Gastrocnemius medialis (tissue), 4 donors: ENCODE measurements at regions of chr13 and their contacts with region 1.

Region 1: DNA sequence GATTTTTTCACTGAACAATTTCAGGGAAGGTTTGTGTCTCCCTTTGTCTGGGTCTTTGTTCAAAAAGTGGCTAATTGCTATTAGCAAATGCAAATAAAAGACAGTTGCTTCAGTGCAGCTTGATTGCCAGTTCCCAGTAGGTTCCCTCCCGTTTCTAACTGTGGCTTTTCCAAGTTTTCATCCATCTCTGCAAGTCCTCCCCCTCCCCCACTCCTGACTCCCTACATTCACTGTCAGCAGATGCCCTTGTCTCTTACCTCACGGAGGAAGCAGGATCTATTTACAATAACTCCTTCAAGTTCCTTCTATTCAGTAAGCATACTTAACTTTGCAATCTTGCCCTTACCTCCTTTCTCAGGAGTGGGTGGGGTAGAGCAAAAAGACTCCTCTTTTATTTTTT is 55.4 kb upstream of the SCEL start:
- DNase-seq: no peak
- ATAC-seq: no peak
- H3K4me3 ChIP-seq: no peak overlapping the region
- H3K27ac ChIP-seq: no peak overlapping the region
- H3K4me1 ChIP-seq: peaks cover 8 to 14% of the 10 kb centered on the region in 2 donors
- H3K27me3 ChIP-seq: no peaks in the 10 kb centered on the region
- CTCF ChIP-seq: no peak
- POLR2A ChIP-seq: no peak

Region 2: DNA sequence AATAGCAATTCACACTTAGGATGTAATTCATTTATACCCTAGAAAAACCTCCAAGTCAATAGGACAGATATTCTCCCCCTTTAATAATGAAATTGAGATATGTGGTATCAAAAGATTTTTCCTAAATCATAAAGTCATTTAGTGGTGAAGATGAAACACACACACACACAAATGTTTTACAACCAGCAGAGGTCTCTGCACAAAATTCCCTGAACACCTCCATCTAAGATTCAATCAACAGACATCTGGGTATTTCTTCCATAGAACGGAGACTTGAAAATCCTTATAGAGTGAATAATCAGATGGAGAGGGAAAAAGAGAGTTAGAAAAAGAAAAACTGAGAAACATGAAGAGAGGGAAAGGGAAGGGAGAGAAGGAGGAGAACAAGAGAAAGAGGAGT is 205.9 kb before region 1 on chr13:
- in situ Hi-C with region 1: no loop called
- intact Hi-C with region 1: loop called (anchors 5 kb)
- DNase-seq: no peak
- ATAC-seq: no peak
- H3K4me3 ChIP-seq: no peak overlapping the region
- H3K27ac ChIP-seq: no peak overlapping the region
- H3K4me1 ChIP-seq: no peaks in the 10 kb centered on the region
- H3K27me3 ChIP-seq: no peaks in the 10 kb centered on the region
- CTCF ChIP-seq: no peak
- POLR2A ChIP-seq: no peak

Region 3: DNA sequence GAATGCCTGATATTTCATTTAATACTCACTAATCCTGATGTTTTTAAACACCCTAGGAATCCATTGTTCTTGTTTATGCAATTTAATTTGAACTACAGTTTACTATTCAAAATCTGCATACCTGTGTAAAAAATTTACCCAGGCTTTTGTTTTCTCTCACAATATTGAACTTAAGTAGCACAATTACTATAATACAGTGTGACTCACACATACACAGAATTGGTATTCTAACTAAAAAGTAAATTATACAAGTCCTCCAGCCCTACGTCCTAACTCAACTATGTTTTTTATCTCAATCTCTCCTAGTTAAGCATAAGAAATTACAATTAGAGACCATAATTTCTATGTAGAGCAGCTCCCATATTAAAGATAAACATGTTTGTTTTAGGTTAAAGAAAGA is 195.0 kb before region 1 on chr13:
- in situ Hi-C with region 1: no loop called
- intact Hi-C with region 1: no loop called
- DNase-seq: no peak
- ATAC-seq: no peak
- H3K4me3 ChIP-seq: no peak overlapping the region
- H3K27ac ChIP-seq: no peak overlapping the region
- H3K4me1 ChIP-seq: no peaks in the 10 kb centered on the region
- H3K27me3 ChIP-seq: no peaks in the 10 kb centered on the region
- CTCF ChIP-seq: no peak
- POLR2A ChIP-seq: no peak